Activated CD4-positive, alpha-beta T cell treated with anti-CD3 and anti-CD28 coated beads for 36 hours (primary cell): ENCODE measurements at regions of chr19 and their contacts with region 1.

Region 1: DNA sequence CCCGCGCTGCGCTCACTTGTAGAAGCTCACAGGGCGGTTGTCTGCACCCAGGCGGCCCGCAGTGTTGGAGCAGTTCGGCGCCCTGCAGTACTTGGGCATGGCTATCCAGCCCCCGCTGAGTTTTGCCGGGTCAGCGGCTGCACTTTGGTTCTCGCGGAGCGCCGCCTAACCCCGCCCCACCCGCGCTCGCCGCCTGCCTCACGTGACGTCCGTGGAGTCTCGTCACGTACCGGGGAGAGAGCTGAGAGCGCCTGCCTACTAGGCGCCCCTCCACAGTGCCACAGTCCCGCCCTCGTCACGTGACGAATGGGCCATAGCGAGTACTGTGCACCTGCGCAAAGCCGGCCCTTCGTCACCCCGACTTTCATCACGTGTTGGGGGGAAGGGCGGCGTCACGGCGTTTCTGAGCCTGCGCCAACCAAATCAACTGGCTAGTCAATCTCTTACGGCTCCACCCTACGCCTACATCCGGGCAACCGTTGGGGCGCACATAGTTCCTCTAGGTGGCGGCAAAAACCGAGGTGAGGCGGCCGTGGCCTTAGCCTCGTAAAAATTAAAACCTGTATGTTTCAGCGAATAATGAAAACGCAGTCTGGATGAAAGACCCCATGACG is at the start of gene THAP8:
- DNase-seq: peak; percentile 100
- ATAC-seq: peak; percentile 91
- H3K4me3 Mint-ChIP-seq: peak within 1 kb of the TSS; percentile 92
- H3K27ac Mint-ChIP-seq: peak within 1 kb of the TSS; percentile 97
- H3K4me1 Mint-ChIP-seq: peaks cover 14% of the 10 kb centered on the region
- H3K27me3 Mint-ChIP-seq: no peaks in the 10 kb centered on the region
- total RNA-seq, gene THAP8: 3.1 to 3.4 TPM

Region 2: DNA sequence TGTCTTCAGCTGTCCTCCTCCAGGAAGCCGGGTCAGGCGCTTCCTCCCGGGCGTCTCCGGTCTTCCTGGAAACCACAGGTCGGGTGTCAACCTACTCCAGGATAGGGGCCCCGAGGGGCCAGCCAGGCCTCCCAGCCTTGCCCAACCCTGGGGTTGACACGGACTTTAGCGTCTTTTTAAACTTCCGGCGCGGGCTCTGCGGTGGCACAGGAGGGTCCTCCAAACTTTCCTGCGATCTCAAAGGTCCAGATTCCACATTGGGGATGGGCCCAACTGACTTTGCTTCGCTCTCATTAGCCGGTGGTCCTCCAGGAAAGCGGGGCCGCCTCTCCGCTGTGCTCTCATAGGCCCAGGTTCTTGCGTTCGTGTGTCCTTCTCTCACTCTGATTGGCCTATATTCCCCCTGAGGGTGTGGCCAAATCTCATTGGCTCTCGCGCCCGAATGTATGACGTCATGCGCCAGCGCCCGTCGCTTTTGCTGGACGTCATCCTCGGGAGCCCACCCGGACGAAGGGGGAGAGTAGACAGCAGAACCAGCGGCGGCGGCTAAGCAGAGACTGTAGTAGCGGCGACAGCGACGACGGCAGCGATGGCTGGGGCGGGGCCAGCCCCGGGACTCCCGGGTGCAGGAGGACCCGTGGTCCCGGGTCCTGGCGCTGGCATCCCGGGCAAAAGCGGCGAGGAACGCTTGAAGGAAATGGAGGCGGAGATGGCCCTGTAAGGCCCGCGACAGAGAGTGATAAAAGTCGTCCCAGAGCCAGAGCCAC is 425.5 kb before region 1 on chr19 and contains the start of gene RBM42:
- CTCF ChIA-PET with region 1: no interaction called
- POLR2A ChIA-PET with region 1: no interaction called
- intact Hi-C with region 1: loop called in 1 of 2 experiments (anchors 1 kb)
- DNase-seq: peak; percentile 97
- ATAC-seq: peak; percentile 100
- H3K4me3 Mint-ChIP-seq: peak within 1 kb of the TSS; percentile 98
- H3K27ac Mint-ChIP-seq: peak within 1 kb of the TSS; percentile 98
- H3K4me1 Mint-ChIP-seq: peaks cover 12% of the 10 kb centered on the region
- H3K27me3 Mint-ChIP-seq: no peaks in the 10 kb centered on the region
- total RNA-seq, gene RBM42: 87.5 to 94.4 TPM

Region 3: DNA sequence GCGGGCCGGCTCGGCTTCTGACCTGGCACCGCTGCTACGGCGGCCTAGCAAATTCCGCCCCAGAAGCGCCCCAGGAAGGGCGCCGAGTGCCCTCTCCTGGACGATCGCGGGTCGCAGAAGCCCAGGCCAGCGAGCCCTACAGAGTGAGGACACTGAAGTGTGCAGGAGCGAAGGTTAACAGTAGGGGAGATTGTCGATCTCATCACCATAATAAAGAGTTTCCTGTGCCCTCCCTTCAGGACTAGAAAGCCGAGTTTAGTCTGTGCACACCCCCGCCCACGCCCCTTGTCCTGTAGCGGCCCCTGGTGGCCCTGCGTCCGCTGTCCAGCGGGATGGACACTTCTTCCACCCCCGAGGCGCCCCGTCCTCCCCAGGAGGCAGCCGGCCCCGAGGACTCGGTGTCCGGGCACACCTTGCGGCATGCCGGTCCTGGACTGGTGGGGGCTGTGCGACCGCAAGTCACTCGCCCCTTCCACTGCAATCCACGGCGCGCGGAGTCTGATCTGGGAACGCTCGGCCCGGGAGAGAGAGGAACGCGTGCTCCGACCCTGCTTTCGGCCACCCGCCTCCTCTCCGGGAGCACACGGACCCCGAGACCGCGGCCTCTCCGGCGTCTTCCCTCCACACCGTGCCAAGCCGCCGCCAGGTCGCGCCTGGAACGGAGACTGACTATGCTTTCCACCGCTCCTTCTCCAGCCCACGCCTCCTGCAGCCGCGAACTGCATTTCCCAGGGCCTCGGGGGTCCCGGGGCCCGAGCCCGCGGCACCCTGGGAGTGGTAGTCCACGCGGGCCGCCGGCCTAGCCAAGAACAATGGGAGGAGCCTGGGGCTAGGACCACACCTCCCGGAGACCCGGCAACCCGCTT is 337.2 kb before region 1 on chr19:
- CTCF ChIA-PET with region 1: no interaction called
- POLR2A ChIA-PET with region 1: no interaction called
- intact Hi-C with region 1: loop called in 1 of 2 experiments (anchors 1 kb)
- DNase-seq: peak; percentile 98
- ATAC-seq: peak; percentile 61
- H3K4me3 Mint-ChIP-seq: peak overlapping the region; percentile 97
- H3K27ac Mint-ChIP-seq: peak overlapping the region; percentile 90
- H3K4me1 Mint-ChIP-seq: peaks cover 41% of the 10 kb centered on the region
- H3K27me3 Mint-ChIP-seq: no peaks in the 10 kb centered on the region

Region 4: DNA sequence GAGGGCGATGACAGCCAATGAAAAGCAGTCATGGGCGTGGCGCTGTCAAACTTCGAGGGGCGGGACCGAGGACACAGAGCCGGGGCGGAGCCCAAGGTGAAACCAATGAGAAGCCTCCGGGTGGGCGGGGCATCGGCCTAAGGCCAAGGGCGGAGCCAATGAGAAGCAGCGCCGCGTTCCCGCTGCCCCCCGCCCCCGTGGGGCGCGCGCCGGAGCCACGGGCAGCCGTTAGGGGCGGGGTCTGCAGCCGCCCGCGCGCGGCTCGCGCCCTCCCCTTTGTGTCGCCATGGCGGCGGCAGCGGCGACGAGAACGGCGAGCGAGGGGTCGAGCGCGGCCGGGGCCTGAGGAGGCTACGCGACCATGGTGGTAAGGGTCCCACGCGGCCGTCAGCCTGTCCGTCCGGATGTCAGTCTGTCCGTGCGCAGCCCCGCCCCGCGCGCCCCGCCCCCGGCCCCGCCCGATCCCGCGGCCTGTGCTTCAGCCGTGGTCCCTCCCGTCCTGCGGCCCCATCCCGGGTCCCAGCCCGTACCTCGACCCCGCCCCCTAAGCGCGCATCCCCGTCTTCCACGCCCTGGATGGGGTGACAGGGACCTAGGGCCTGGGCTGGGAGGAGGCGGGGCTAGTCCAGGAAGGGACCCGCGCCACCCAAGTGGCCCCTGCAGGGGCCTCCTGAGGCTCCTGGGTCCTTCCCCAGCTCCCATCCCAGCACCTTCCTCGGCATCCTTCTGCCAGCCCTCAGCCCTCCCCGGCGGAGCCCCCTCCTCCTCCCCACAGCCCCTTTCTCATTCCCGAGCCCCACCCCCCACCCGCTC is 278.7 kb before region 1 on chr19 and contains the start of gene ARHGAP33:
- CTCF ChIA-PET with region 1: no interaction called
- POLR2A ChIA-PET with region 1: no interaction called
- intact Hi-C with region 1: loop called in 1 of 2 experiments (anchors 1 kb)
- DNase-seq: peak; percentile 100
- ATAC-seq: peak; percentile 98
- H3K4me3 Mint-ChIP-seq: peak within 1 kb of the TSS; percentile 75
- H3K27ac Mint-ChIP-seq: no peak within 1 kb of the TSS
- H3K4me1 Mint-ChIP-seq: peaks cover 12% of the 10 kb centered on the region
- H3K27me3 Mint-ChIP-seq: no peaks in the 10 kb centered on the region
- total RNA-seq, gene ARHGAP33: 27.8 to 35.2 TPM

Region 5: GRCh38 chr19:35790981-35791813 is 263.0 kb before region 1 on chr19:
- CTCF ChIA-PET with region 1: no interaction called
- POLR2A ChIA-PET with region 1: no interaction called
- intact Hi-C with region 1: no loop called
- DNase-seq: peak; percentile 45
- ATAC-seq: peak; percentile 74
- H3K4me3 Mint-ChIP-seq: no peak overlapping the region
- H3K27ac Mint-ChIP-seq: no peak overlapping the region
- H3K4me1 Mint-ChIP-seq: no peaks in the 10 kb centered on the region
- H3K27me3 Mint-ChIP-seq: peaks cover 7% of the 10 kb centered on the region

Region 6: GRCh38 chr19:35973486-35973885 is 80.7 kb before region 1 on chr19:
- CTCF ChIA-PET with region 1: no interaction called
- POLR2A ChIA-PET with region 1: no interaction called
- intact Hi-C with region 1: no loop called
- DNase-seq: no peak
- ATAC-seq: peak; percentile 26
- H3K4me3 Mint-ChIP-seq: no peak overlapping the region
- H3K27ac Mint-ChIP-seq: no peak overlapping the region
- H3K4me1 Mint-ChIP-seq: peaks cover 5% of the 10 kb centered on the region
- H3K27me3 Mint-ChIP-seq: peaks cover 7% of the 10 kb centered on the region

Region 7: GRCh38 chr19:35995048-35995993 is 58.9 kb before region 1 on chr19 and contains the start of gene SDHAF1:
- CTCF ChIA-PET with region 1: no interaction called
- POLR2A ChIA-PET with region 1: no interaction called
- intact Hi-C with region 1: loop called (anchors 1 to 5 kb)
- DNase-seq: peak; percentile 98
- ATAC-seq: peak; percentile 85
- H3K4me3 Mint-ChIP-seq: peak within 1 kb of the TSS; percentile 94
- H3K27ac Mint-ChIP-seq: peak within 1 kb of the TSS; percentile 96
- H3K4me1 Mint-ChIP-seq: peaks cover 34% of the 10 kb centered on the region
- H3K27me3 Mint-ChIP-seq: no peaks in the 10 kb centered on the region
- total RNA-seq, gene SDHAF1: 16.0 to 19.2 TPM

Region 8: GRCh38 chr19:36032251-36033104 is 21.7 kb before region 1 on chr19 and contains the start of gene CLIP3:
- CTCF ChIA-PET with region 1: no interaction called
- POLR2A ChIA-PET with region 1: no interaction called
- intact Hi-C with region 1: no loop called
- DNase-seq: peak; percentile 56
- ATAC-seq: peak; percentile 42
- H3K4me3 Mint-ChIP-seq: peak within 1 kb of the TSS; percentile 32
- H3K27ac Mint-ChIP-seq: no peak within 1 kb of the TSS
- H3K4me1 Mint-ChIP-seq: peaks cover 32% of the 10 kb centered on the region
- H3K27me3 Mint-ChIP-seq: no peaks in the 10 kb centered on the region
- total RNA-seq, gene CLIP3: 0.16 to 0.42 TPM

Region 9: GRCh38 chr19:36132489-36132891 is 78.3 kb after region 1 on chr19:
- CTCF ChIA-PET with region 1: no interaction called
- POLR2A ChIA-PET with region 1: no interaction called
- intact Hi-C with region 1: loop called in 1 of 2 experiments (anchors 1 kb)
- DNase-seq: peak; percentile 74
- ATAC-seq: peak; percentile 77
- H3K4me3 Mint-ChIP-seq: no peak overlapping the region
- H3K27ac Mint-ChIP-seq: peak overlapping the region; percentile 80
- H3K4me1 Mint-ChIP-seq: peaks cover 33% of the 10 kb centered on the region
- H3K27me3 Mint-ChIP-seq: no peaks in the 10 kb centered on the region

Region 10: DNA sequence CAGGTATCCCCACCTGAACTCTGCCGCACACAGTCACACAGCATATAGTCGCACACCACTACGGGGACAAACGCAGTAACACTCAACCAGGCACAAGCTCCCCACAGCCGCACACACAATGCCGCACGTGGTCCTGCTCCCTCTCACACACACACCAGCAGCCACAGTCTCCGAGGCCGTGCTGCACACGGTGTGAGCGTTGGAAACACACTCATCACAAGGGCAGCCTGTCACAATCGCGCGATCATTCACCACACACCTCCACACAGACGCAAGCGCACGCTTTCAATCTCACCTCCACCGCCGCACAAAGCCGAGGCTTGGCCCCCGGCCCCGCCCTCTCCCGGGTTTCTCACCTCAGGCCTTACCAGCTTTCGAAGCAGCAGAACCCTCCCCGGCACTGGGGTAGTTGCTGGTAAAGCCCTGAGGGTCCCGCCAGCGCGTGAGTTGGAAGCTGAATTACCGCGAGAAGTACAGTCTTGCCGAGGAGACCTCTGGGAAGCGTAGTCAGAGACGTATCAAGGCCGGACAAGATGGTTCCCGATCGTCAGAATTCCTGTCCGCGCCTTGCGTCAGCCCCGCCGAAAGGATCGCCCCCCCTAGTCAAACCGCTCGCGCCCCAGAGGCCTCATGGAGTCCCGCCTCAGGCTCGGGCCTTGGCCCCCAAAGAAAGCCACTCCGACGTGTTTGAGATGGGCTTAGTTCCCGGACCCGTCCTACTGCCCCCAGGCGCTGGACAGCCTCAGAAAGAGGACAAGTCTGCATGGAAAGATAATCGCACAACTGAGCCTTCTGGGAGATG is 435.1 kb after region 1 on chr19 and contains the start of gene ZNF566:
- CTCF ChIA-PET with region 1: no interaction called
- POLR2A ChIA-PET with region 1: no interaction called
- intact Hi-C with region 1: loop called in 1 of 2 experiments (anchors 1 kb)
- DNase-seq: peak; percentile 97
- ATAC-seq: peak; percentile 93
- H3K4me3 Mint-ChIP-seq: peak within 1 kb of the TSS; percentile 86
- H3K27ac Mint-ChIP-seq: peak within 1 kb of the TSS; percentile 98
- H3K4me1 Mint-ChIP-seq: peaks cover 24% of the 10 kb centered on the region
- H3K27me3 Mint-ChIP-seq: no peaks in the 10 kb centered on the region
- total RNA-seq, gene ZNF566: 4.7 to 5.9 TPM